CD8-positive, alpha-beta T cell (primary cell): ENCODE measurements at regions of chr11 and their contacts with region 1.

Region 1: GRCh38 chr11:6757373-6757967 is 14.3 kb downstream of the OR2AG2 start:
- DNase-seq: peak; percentile 30 to 82 (median 65)
- ATAC-seq: peak; percentile 80
- H3K4me3 ChIP-seq: no peak overlapping the region
- H3K4me3 Mint-ChIP-seq: no peak overlapping the region
- H3K27ac ChIP-seq: no peak overlapping the region
- H3K27ac Mint-ChIP-seq: no peak overlapping the region
- H3K4me1 ChIP-seq: no peaks in the 10 kb centered on the region
- H3K4me1 Mint-ChIP-seq: peaks cover 15% of the 10 kb centered on the region
- H3K27me3 ChIP-seq: no peaks in the 10 kb centered on the region
- H3K27me3 Mint-ChIP-seq: no peaks in the 10 kb centered on the region
- CTCF ChIP-seq: peak; percentile 74

Region 2: DNA sequence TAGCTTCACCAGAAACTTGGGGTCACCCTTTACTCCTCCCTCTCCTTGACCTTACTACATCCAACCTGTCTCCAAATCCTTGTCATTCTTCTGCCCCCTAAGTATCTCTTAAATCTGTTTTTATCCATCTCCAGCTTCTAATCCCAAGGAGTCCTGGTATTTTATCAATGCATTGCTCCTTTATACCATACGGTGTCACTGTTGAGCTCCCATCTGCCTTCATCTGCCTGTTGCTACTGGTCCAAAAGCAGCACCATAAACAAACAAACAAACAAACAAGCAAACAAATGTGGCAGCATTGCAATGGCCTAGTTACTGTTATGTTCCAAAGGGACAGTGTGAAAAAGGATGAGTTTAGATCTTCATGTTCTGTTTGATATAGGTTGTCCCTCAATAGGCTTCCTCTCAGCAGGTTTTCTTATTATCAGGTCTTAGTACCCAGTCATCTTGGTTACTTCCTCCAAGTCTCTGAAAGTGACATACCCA is 226.2 kb before region 1 on chr11:
- CTCF ChIA-PET with region 1: interaction called, 60 read pairs
- POLR2A ChIA-PET with region 1: no interaction called
- intact Hi-C with region 1: loop called (anchors 1 kb)
- DNase-seq: peak in 3 of 9 experiments; percentile 14 to 68 (median 56)
- ATAC-seq: peak; percentile 83
- H3K4me3 ChIP-seq: no peak overlapping the region
- H3K4me3 Mint-ChIP-seq: no peak overlapping the region
- H3K27ac ChIP-seq: no peak overlapping the region
- H3K27ac Mint-ChIP-seq: no peak overlapping the region
- H3K4me1 ChIP-seq: peaks cover 4% of the 10 kb centered on the region
- H3K4me1 Mint-ChIP-seq: peaks cover 7% of the 10 kb centered on the region
- H3K27me3 ChIP-seq: no peaks in the 10 kb centered on the region
- H3K27me3 Mint-ChIP-seq: no peaks in the 10 kb centered on the region
- CTCF ChIP-seq: peak; percentile 84

Region 3: GRCh38 chr11:6705905-6706535 is 51.5 kb before region 1 on chr11:
- CTCF ChIA-PET with region 1: interaction called, 119 read pairs
- POLR2A ChIA-PET with region 1: interaction called, 6 read pairs
- intact Hi-C with region 1: loop called (anchors 1 kb)
- DNase-seq: peak in 4 of 9 experiments; percentile 45 to 69 (median 52)
- ATAC-seq: peak; percentile 83
- H3K4me3 ChIP-seq: no peak overlapping the region
- H3K4me3 Mint-ChIP-seq: no peak overlapping the region
- H3K27ac ChIP-seq: peak overlapping the region in 1 of 2 experiments; percentile 1
- H3K27ac Mint-ChIP-seq: peak overlapping the region; percentile 80
- H3K4me1 ChIP-seq: no peaks in the 10 kb centered on the region
- H3K4me1 Mint-ChIP-seq: peaks cover 25% of the 10 kb centered on the region
- H3K27me3 ChIP-seq: no peaks in the 10 kb centered on the region
- H3K27me3 Mint-ChIP-seq: no peaks in the 10 kb centered on the region
- CTCF ChIP-seq: peak; percentile 90

Region 4: DNA sequence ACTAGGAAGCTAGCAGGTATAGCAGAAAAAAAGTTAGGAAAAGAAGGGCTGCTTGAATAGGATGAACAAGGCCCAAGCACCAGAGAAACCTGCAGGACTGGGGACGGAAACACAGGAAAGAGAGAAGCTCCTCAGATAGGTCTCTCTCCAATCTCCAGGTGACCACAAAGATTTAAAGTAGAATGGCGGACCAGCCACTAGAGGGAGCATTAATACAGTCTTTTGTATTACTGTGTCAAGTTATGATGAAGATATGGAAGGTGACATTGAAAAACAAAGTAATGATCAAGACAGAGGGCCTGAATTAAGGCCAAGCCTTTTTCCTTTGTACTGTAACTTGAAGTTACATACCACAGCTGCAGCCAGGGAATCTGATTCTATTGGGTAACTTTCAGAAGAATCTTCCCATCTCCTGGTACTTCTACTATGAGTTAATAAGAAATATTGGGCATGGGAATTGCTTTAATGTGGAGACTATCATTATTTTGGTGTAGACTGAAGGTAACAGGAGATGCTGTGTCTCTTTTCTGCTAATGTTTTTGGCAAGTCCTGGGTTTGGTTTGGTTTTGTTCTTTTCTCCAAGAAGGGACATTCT is 19.5 kb before region 1 on chr11:
- CTCF ChIA-PET with region 1: interaction called, 447 read pairs
- POLR2A ChIA-PET with region 1: interaction called, 11 read pairs
- intact Hi-C with region 1: loop called (anchors 1 kb)
- DNase-seq: peak; percentile 44 to 87 (median 69)
- ATAC-seq: peak; percentile 54
- H3K4me3 ChIP-seq: no peak overlapping the region
- H3K4me3 Mint-ChIP-seq: peak overlapping the region; percentile 9
- H3K27ac ChIP-seq: peak overlapping the region; percentile 1 to 8
- H3K27ac Mint-ChIP-seq: peak overlapping the region; percentile 87
- H3K4me1 ChIP-seq: peaks cover 91% of the 10 kb centered on the region
- H3K4me1 Mint-ChIP-seq: peaks cover 91% of the 10 kb centered on the region
- H3K27me3 ChIP-seq: no peaks in the 10 kb centered on the region
- H3K27me3 Mint-ChIP-seq: no peaks in the 10 kb centered on the region
- CTCF ChIP-seq: peak; percentile 59

Region 5: GRCh38 chr11:6841694-6842093 is 84.2 kb after region 1 on chr11:
- CTCF ChIA-PET with region 1: no interaction called
- POLR2A ChIA-PET with region 1: no interaction called
- intact Hi-C with region 1: no loop called
- DNase-seq: no peak
- ATAC-seq: no peak
- H3K4me3 ChIP-seq: no peak overlapping the region
- H3K4me3 Mint-ChIP-seq: no peak overlapping the region
- H3K27ac ChIP-seq: no peak overlapping the region
- H3K27ac Mint-ChIP-seq: no peak overlapping the region
- H3K4me1 ChIP-seq: no peaks in the 10 kb centered on the region
- H3K4me1 Mint-ChIP-seq: no peaks in the 10 kb centered on the region
- H3K27me3 ChIP-seq: no peaks in the 10 kb centered on the region
- H3K27me3 Mint-ChIP-seq: peaks cover 21% of the 10 kb centered on the region
- CTCF ChIP-seq: no peak

Region 6: GRCh38 chr11:6855971-6856541 is 98.6 kb after region 1 on chr11:
- CTCF ChIA-PET with region 1: no interaction called
- POLR2A ChIA-PET with region 1: no interaction called
- intact Hi-C with region 1: no loop called
- DNase-seq: no peak
- ATAC-seq: no peak
- H3K4me3 ChIP-seq: no peak overlapping the region
- H3K4me3 Mint-ChIP-seq: no peak overlapping the region
- H3K27ac ChIP-seq: no peak overlapping the region
- H3K27ac Mint-ChIP-seq: no peak overlapping the region
- H3K4me1 ChIP-seq: no peaks in the 10 kb centered on the region
- H3K4me1 Mint-ChIP-seq: no peaks in the 10 kb centered on the region
- H3K27me3 ChIP-seq: no peaks in the 10 kb centered on the region
- H3K27me3 Mint-ChIP-seq: peaks cover 3% of the 10 kb centered on the region
- CTCF ChIP-seq: no peak

Region 7: GRCh38 chr11:7688238-7688826 is 930.9 kb after region 1 on chr11:
- CTCF ChIA-PET with region 1: no interaction called
- POLR2A ChIA-PET with region 1: no interaction called
- intact Hi-C with region 1: loop called in 1 of 2 experiments (anchors 5 kb)
- DNase-seq: peak in 2 of 9 experiments; percentile 31 to 50
- ATAC-seq: no peak
- H3K4me3 ChIP-seq: no peak overlapping the region
- H3K4me3 Mint-ChIP-seq: no peak overlapping the region
- H3K27ac ChIP-seq: no peak overlapping the region
- H3K27ac Mint-ChIP-seq: no peak overlapping the region
- H3K4me1 ChIP-seq: no peaks in the 10 kb centered on the region
- H3K4me1 Mint-ChIP-seq: no peaks in the 10 kb centered on the region
- H3K27me3 ChIP-seq: peaks cover 2 to 5% of the 10 kb centered on the region in 2 experiments
- H3K27me3 Mint-ChIP-seq: peaks cover 26% of the 10 kb centered on the region
- CTCF ChIP-seq: peak; percentile 81